ENCODE measurements at regions of chr7 and their contacts with region 1.

Region 1: GRCh38 chr7:142626420-142627035 is 122.7 kb upstream of the PRSS1 start:
- DNase-seq: peak; percentile 79
- H3K4me3 Mint-ChIP-seq: peak overlapping the region; percentile 78
- H3K27ac Mint-ChIP-seq: peak overlapping the region; percentile 86
- H3K4me1 Mint-ChIP-seq: no peaks in the 10 kb centered on the region
- H3K27me3 Mint-ChIP-seq: no peaks in the 10 kb centered on the region

Region 2: GRCh38 chr7:142248166-142249160 is 378.1 kb before region 1 on chr7:
- CTCF ChIA-PET with region 1: no interaction called
- POLR2A ChIA-PET with region 1: no interaction called
- intact Hi-C with region 1: no loop called
- DNase-seq: no peak
- H3K4me3 Mint-ChIP-seq: no peak overlapping the region
- H3K27ac Mint-ChIP-seq: no peak overlapping the region
- H3K4me1 Mint-ChIP-seq: no peaks in the 10 kb centered on the region
- H3K27me3 Mint-ChIP-seq: peaks cover 7% of the 10 kb centered on the region

Region 3: DNA sequence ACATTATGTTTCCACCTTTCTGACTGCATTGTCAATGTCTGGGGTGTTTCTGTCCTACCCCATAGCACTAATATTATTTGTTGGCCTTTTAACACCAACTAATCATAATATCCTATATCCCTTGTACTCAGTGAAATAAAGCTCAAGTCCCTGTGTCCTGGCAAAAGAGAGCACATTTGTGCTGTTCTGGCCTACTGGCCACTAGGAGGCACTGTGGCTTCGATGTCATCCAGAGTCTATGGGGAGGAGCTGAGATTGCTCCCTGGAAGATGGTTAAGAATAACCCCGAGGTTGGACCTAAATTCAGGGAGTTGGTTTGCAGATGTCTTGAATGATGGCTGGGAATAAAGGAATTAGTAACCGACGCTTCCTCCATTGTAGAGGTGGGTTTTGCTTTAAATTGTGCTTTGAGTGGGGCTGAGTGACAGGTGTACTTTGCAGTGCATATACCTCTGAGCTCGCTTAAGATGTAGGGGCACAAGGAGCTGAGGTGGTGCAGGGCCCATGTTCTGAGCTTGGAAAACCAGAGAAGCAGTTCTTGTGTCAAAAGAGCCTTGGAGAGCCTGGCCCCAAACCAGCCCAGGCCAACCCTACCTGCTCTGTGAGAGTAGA is 68.5 kb before region 1 on chr7:
- CTCF ChIA-PET with region 1: no interaction called
- POLR2A ChIA-PET with region 1: no interaction called
- intact Hi-C with region 1: no loop called
- DNase-seq: peak; percentile 65
- H3K4me3 Mint-ChIP-seq: peak overlapping the region; percentile 28
- H3K27ac Mint-ChIP-seq: peak overlapping the region; percentile 35
- H3K4me1 Mint-ChIP-seq: peaks cover 5% of the 10 kb centered on the region
- H3K27me3 Mint-ChIP-seq: peaks cover 3% of the 10 kb centered on the region

Region 4: DNA sequence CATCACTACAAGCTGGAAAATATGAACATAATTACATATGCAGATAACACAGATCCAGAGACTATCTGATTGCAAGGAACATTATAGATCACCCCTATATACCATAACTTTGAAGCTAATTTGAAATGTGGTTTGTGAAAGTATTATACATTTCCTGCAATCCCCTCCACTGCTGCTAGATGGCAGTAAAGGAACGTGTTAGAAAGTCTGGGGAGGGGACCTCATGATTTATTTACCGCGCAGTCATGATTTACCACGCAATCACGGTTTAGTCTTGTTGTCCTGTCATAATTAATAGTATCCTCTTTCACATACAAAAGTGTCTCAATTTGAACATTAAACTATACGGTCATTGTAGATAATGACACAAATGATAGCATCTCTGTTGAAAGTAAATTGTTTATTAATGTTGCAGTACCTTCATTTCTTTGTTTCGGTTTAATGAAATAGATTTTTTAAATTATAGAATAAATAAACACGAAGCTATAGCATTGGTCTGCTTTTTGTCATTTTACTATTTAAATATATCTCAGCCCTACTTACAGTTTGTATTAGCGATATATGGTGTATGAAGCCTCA is 22.6 kb before region 1 on chr7:
- CTCF ChIA-PET with region 1: interaction called, 10 read pairs
- POLR2A ChIA-PET with region 1: no interaction called
- intact Hi-C with region 1: no loop called
- DNase-seq: peak; percentile 58
- H3K4me3 Mint-ChIP-seq: peak overlapping the region; percentile 35
- H3K27ac Mint-ChIP-seq: no peak overlapping the region
- H3K4me1 Mint-ChIP-seq: peaks cover 3% of the 10 kb centered on the region
- H3K27me3 Mint-ChIP-seq: no peaks in the 10 kb centered on the region